Activated B cell treated with CpG ODN at 0.5 μM for 24 hours (primary cell): ENCODE measurements at regions of chr1 and their contacts with region 1.

Region 1: GRCh38 chr1:212035123-212035834 is at the starts of genes DTL and INTS7:
- DNase-seq: peak; percentile 93
- ATAC-seq: peak; percentile 86
- H3K4me3 Mint-ChIP-seq: peak within 1 kb of the TSS; percentile 99
- H3K27ac Mint-ChIP-seq: peak within 1 kb of the TSS; percentile 99
- H3K4me1 Mint-ChIP-seq: peaks cover 58% of the 10 kb centered on the region
- H3K27me3 Mint-ChIP-seq: no peaks in the 10 kb centered on the region
- CTCF ChIP-seq: peak; percentile 38
- total RNA-seq, gene DTL: 4.2 and 5.0 TPM in 2 replicates
- total RNA-seq, gene INTS7: 19.1 and 19.9 TPM in 2 replicates

Region 2: GRCh38 chr1:211258756-211259637 is 776.3 kb before region 1 on chr1 and contains the start of gene RCOR3:
- CTCF ChIA-PET with region 1: no interaction called
- POLR2A ChIA-PET with region 1: interaction called, 9 read pairs
- intact Hi-C with region 1: loop called (anchors 2 kb)
- DNase-seq: peak; percentile 86
- ATAC-seq: peak; percentile 75
- H3K4me3 Mint-ChIP-seq: peak within 1 kb of the TSS; percentile 93
- H3K27ac Mint-ChIP-seq: peak within 1 kb of the TSS; percentile 97
- H3K4me1 Mint-ChIP-seq: peaks cover 20% of the 10 kb centered on the region
- H3K27me3 Mint-ChIP-seq: no peaks in the 10 kb centered on the region
- CTCF ChIP-seq: peak; percentile 59
- total RNA-seq, gene RCOR3: 59.3 and 72.3 TPM in 2 replicates

Region 3: DNA sequence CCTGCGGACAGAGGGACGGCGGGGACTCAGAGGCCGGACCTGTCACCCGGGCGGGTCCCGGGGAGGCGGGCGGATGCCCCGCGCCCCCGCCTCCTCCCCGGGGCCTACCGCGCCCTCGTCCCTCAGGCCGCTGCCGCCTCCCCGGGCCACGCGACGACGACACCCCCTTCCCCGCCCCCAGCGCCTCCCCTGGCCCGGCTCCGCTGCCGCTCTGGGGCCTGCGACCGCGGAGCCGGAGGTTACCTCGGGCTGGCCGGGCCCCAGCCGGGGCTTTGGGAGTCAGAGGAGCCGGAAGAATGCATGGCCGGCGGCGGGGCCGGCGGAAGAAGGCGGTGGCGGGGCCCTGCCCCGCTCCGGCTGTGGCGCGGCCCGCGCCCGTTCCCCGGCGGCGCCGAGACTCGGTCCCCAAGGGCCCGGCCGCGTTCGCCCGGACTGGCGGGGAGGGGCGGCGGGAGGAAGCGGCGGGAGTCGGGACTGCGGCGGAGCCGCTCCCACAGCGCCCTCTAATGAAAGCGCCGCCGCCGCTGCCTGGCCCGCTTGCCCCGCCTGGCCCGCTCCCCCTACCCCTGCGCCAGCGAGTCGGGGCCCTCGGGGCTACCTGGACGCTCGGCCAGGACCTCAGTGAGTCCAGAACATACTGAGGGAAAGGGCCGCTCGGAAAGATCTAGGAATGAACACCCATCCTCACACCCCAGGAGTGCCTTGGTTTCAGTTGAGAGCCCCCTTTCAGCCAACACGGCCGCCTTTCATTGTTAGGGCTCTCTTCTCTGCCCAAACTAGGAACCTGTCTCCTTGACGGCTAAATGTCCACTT is 204.7 kb before region 1 on chr1 and contains the start of gene LPGAT1:
- CTCF ChIA-PET with region 1: no interaction called
- POLR2A ChIA-PET with region 1: no interaction called
- intact Hi-C with region 1: loop called (anchors 1 kb)
- DNase-seq: peak; percentile 78
- ATAC-seq: peak; percentile 86
- H3K4me3 Mint-ChIP-seq: peak within 1 kb of the TSS; percentile 95
- H3K27ac Mint-ChIP-seq: peak within 1 kb of the TSS; percentile 89
- H3K4me1 Mint-ChIP-seq: peaks cover 55% of the 10 kb centered on the region
- H3K27me3 Mint-ChIP-seq: no peaks in the 10 kb centered on the region
- CTCF ChIP-seq: no peak
- total RNA-seq, gene LPGAT1: 39.2 and 43.6 TPM in 2 replicates

Region 4: DNA sequence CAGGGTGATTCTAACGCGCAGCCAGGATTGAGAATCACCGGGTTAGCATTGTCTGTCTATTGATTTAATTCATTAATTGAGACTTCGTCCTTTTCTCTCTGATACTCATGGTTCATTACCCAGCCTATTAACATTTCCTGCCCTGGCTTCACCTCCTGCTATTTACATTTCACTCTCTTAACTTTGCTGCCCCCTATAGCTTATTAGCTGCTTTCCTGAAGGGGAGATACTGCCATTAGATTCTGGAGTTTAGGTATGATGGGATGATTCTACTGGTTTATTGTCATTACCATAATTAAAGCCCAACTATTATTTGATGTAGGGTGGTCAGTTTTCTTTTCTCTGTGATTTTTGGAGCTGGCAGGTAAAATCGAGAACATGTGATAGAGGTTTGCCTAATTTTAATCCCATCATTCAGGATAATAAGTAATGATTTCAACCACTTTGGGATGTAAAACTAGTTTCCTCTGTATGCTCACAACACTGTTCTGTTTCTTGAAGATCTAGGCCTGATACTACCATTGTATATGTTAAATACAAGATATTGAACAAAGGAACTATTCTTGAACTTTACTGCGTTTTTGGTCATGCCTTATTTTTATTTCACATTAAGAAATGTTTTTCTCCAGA is 256.3 kb after region 1 on chr1:
- CTCF ChIA-PET with region 1: interaction called, 11 read pairs
- POLR2A ChIA-PET with region 1: interaction called, 14 read pairs
- intact Hi-C with region 1: no loop called
- DNase-seq: no peak
- ATAC-seq: peak; percentile 91
- H3K4me3 Mint-ChIP-seq: peak overlapping the region; percentile 2
- H3K27ac Mint-ChIP-seq: no peak overlapping the region
- H3K4me1 Mint-ChIP-seq: peaks cover 78% of the 10 kb centered on the region
- H3K27me3 Mint-ChIP-seq: no peaks in the 10 kb centered on the region
- CTCF ChIP-seq: peak; percentile 44

Region 5: DNA sequence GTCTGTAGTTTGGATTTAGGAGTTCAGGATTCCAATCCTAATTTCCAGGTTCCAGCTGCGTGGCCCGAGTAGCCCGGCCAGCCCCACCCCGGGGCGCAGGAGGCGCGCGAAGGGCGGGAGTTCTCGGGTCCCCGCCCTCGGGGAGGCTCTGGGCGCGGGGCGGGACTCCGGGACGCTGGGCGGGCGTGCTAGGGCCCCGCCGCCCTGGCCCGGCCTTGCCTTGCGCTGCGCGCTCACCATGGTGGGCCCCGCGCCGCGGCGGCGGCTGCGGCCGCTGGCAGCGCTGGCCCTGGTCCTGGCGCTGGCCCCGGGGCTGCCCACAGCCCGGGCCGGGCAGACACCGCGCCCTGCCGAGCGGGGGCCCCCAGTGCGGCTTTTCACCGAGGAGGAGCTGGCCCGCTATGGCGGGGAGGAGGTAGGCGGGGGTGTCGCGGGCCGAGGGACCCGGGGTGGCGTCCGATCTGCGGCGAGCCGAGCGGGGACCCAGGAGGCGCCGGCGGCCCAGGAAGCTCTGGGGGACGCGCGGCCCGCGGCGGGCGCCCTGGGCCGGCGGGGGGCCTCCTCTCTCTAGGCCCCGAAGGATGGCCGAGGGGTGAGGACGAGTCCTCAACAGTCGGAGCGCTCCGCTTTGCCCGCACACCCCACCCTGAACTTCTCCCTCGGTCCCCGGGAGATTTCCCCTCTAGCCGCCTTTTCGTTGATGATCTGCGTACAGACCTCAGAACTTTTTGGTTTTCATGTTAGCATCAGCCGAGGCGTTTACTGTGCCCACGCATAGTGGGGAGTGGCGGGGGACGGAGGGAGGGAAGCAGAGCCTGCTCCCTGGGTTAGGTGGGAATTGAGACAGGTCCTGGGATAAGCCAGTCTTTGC is 397.7 kb after region 1 on chr1 and contains the start of gene NENF:
- CTCF ChIA-PET with region 1: no interaction called
- POLR2A ChIA-PET with region 1: interaction called, 3 read pairs
- intact Hi-C with region 1: loop called (anchors 1 kb)
- DNase-seq: peak; percentile 80
- ATAC-seq: peak; percentile 99
- H3K4me3 Mint-ChIP-seq: peak within 1 kb of the TSS; percentile 78
- H3K27ac Mint-ChIP-seq: peak within 1 kb of the TSS; percentile 22
- H3K4me1 Mint-ChIP-seq: peaks cover 16% of the 10 kb centered on the region
- H3K27me3 Mint-ChIP-seq: no peaks in the 10 kb centered on the region
- CTCF ChIP-seq: no peak
- total RNA-seq, gene NENF: 24.1 and 26.4 TPM in 2 replicates

Region 6: DNA sequence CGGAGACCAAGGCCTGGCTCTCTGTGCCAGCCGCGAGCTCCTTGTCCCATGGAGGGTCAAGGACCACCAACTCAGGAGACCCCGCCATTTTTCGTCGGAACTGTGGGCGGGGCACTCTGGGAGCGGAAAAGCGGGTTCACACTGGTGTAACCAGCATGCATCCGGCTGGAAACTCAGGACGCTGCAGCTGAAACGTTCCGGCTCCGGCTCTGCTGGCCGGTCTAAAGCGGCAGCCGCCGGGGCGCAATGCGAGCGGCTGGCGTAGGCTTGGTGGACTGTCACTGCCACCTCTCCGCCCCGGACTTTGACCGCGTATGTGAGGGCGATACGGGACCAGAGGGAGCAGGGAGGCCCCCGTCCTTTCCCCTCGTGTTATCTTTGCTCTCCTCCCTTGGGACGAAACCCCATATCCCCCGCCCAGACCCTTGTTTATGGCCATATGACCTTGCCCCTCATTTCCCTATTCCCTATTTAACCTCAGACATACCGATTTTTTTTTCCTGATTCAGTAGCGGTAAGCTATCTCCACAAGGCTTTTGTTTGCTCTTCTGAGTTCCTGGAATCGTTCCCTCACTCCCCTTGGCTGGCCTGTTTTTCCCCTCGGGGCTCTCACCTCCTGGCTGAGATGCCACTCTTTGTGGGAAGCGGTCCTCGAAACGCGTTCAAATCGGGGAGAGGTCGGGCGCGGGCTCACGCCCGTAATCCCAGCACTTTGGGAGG is 756.6 kb after region 1 on chr1 and contains the starts of genes NSL1 and TATDN3:
- CTCF ChIA-PET with region 1: interaction called, 3 read pairs
- POLR2A ChIA-PET with region 1: no interaction called
- intact Hi-C with region 1: loop called (anchors 10 kb)
- DNase-seq: peak; percentile 98
- ATAC-seq: peak; percentile 73
- H3K4me3 Mint-ChIP-seq: peak within 1 kb of the TSS; percentile 99
- H3K27ac Mint-ChIP-seq: peak within 1 kb of the TSS; percentile 98
- H3K4me1 Mint-ChIP-seq: peaks cover 60% of the 10 kb centered on the region
- H3K27me3 Mint-ChIP-seq: no peaks in the 10 kb centered on the region
- CTCF ChIP-seq: no peak
- total RNA-seq, gene NSL1: 34.4 and 44.5 TPM in 2 replicates
- total RNA-seq, gene TATDN3: 30.3 and 31.4 TPM in 2 replicates